H1 (cell line): ENCODE measurements at regions of chr17 and their contacts with region 1.

Region 1: DNA sequence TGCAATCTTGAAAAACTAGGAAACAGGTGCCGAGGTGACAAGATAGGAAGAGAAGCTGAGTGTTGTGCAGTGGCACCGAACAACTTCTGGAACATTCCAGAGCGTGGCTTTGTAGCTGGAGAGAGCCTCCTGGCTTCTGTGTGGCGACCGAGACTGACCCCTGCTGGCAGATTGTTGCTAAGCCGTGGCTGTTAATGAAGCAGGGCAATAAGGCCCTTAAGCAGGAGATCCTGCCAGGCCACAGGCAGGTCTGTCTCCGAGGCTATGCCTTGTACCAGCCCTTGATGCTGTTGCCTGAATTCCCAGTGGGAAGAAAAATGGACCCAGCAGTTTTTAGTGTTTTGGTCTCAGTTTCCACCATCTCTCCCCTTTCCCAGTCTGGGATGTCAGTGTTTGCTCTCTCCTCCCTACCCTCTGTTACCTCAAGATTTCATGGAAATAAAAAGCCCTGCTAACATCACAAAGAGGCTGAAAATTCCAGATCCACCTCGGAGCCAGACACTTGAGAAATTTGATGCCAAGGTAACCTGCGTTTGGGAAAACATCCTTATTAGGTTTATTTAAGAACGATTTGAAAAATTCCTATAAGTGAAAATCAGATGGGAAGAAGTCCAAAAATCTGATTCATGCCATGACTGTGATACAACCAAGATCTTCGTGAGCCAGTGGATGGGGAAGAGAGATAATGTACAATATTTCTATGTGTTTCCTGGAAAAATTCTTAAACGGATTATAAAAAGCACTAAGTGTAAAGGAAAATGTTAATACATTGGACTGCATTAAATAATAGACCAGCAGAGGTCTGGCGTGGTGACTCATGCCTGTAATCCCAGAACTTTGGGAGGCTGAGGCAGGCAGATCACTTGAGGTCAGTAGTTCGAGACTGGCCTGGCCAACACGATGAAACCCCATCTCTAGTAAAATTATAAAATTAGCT is 265.1 kb downstream of the PRKCA start:
- DNase-seq: peak; percentile 75 to 95
- H3K4me3 ChIP-seq: no peak overlapping the region
- H3K27ac ChIP-seq: no peak overlapping the region
- H3K4me1 ChIP-seq: peaks cover 5 to 12% (median 9%) of the 10 kb centered on the region in 4 experiments; a peak in 5 of 7 replicates
- H3K27me3 ChIP-seq: no peaks in the 10 kb centered on the region
- CTCF ChIP-seq: peak; percentile 85 to 97 (median 89)
- EP300 ChIP-seq: no peak
- POLR2A ChIP-seq: no peak
- RAD21 ChIP-seq: peak; percentile 95 to 98

Region 2: DNA sequence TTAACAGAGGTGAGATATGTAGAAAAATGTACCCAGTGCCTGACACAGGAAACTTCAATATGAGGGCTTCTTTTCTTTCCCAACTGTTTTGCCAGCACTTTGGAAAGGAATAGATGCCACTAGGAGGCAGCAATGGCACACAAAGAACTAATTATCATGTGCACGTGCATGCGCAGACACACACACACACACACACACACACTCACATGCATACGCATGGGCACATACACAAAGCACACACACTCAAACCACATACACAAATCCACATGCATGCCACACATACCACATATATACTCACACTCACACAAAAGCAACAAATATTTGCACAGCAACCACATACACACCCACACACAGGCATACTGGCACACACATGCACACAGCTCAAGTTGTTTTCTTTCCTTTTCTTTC is 366.8 kb before region 1 on chr17:
- CTCF ChIA-PET with region 1: interaction called, 19 read pairs
- POLR2A ChIA-PET with region 1: no interaction called
- DNase-seq: peak in 1 of 2 experiments; percentile 52
- H3K4me3 ChIP-seq: no peak overlapping the region
- H3K27ac ChIP-seq: no peak overlapping the region
- H3K4me1 ChIP-seq: no peaks in the 10 kb centered on the region
- H3K27me3 ChIP-seq: no peaks in the 10 kb centered on the region; a peak in 1 of 7 replicates
- CTCF ChIP-seq: peak; percentile 3 to 83 (median 60)
- EP300 ChIP-seq: no peak
- POLR2A ChIP-seq: no peak
- RAD21 ChIP-seq: peak; percentile 87

Region 3: GRCh38 chr17:66446419-66446818 is 121.1 kb before region 1 on chr17:
- CTCF ChIA-PET with region 1: interaction called, 12 read pairs
- POLR2A ChIA-PET with region 1: no interaction called
- DNase-seq: no peak
- H3K4me3 ChIP-seq: no peak overlapping the region
- H3K27ac ChIP-seq: no peak overlapping the region
- H3K4me1 ChIP-seq: peaks cover 11 to 17% (median 14%) of the 10 kb centered on the region in 4 experiments
- H3K27me3 ChIP-seq: no peaks in the 10 kb centered on the region
- CTCF ChIP-seq: no peak
- EP300 ChIP-seq: no peak
- POLR2A ChIP-seq: no peak
- RAD21 ChIP-seq: no peak

Region 4: GRCh38 chr17:66481271-66481670 is 86.2 kb before region 1 on chr17:
- CTCF ChIA-PET with region 1: interaction called, 19 read pairs
- POLR2A ChIA-PET with region 1: no interaction called
- DNase-seq: no peak
- H3K4me3 ChIP-seq: no peak overlapping the region
- H3K27ac ChIP-seq: no peak overlapping the region
- H3K4me1 ChIP-seq: peaks cover 2 to 9% (median 5%) of the 10 kb centered on the region in 4 experiments; a peak in 5 of 7 replicates
- H3K27me3 ChIP-seq: no peaks in the 10 kb centered on the region
- CTCF ChIP-seq: no peak
- EP300 ChIP-seq: no peak
- POLR2A ChIP-seq: no peak
- RAD21 ChIP-seq: no peak

Region 5: DNA sequence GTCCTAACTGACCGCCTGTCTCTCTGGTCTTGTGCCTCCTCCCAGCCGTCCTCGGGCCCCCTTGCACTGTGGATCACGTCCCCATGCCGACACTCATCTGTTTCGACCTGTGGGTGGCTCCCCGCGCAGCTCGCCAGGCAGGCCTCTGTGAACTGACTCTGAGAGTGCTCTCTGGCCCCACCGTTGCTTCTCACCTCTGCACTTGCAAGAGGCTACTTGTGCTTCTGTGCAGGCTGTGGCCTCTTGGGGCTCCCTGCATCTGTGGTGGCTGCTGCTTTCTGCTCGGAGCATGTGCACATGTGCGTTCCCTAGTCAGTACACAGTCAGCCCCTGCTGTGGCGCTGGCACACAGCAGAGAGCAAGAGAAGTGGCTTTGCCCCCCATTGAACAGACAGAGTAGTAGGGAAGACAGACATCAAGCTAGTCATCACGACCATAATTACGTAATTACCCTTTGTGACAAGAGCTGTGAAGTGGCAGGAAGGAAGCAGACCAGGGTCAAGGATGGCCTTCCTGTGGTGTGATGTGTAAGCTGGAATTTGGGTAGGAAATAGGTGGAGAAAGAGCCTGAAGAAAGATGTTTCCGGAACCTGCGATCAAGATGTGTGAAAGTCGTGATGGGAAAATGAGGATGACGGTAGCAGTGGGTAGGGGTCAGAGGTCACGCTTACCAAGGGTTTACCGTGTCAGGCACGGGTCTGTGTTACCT is 11.4 kb after region 1 on chr17:
- CTCF ChIA-PET with region 1: interaction called, 13 read pairs
- POLR2A ChIA-PET with region 1: no interaction called
- DNase-seq: no peak
- H3K4me3 ChIP-seq: no peak overlapping the region
- H3K27ac ChIP-seq: no peak overlapping the region
- H3K4me1 ChIP-seq: peaks cover 0 to 14% (median 7%) of the 10 kb centered on the region in 4 experiments; a peak in 5 of 7 replicates
- H3K27me3 ChIP-seq: no peaks in the 10 kb centered on the region
- CTCF ChIP-seq: no peak
- EP300 ChIP-seq: no peak
- POLR2A ChIP-seq: no peak
- RAD21 ChIP-seq: no peak